BJ (cell line): ENCODE measurements at regions of chr11 and their contacts with region 1.

Region 1: GRCh38 chr11:101456812-101457211 is 127.0 kb downstream of the TRPC6 start:
- DNase-seq: no peak
- H3K4me3 ChIP-seq: no peak overlapping the region
- H3K27me3 ChIP-seq: no peaks in the 10 kb centered on the region
- CTCF ChIP-seq: peak; percentile 33; the same call in 1 of the 2 replicates

Region 2: DNA sequence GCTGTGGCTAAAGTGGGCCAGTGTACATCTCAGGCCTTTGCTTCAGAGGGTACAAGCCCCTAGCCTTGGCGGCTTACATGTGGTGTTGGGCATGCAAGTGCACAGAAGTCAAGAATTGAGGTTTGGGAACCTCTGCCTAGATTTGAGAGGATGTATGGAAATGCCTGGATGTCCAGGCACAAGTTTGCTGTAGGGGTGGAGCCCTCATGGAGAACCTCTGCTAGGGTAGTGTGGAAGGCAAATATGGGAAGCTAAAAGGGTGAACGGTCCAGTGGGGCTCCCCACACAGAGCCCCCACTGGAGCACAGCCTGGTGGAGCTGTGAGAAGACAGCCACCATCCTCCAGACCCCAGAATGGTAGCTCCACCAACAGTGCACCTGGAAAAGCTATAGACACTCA is 298.7 kb before region 1 on chr11:
- CTCF ChIA-PET with region 1: no interaction called
- POLR2A ChIA-PET with region 1: no interaction called
- DNase-seq: no peak
- H3K4me3 ChIP-seq: no peak overlapping the region
- H3K27me3 ChIP-seq: no peaks in the 10 kb centered on the region
- CTCF ChIP-seq: no peak

Region 3: GRCh38 chr11:101446238-101446637 is 10.6 kb before region 1 on chr11:
- CTCF ChIA-PET with region 1: interaction called, 13 read pairs
- POLR2A ChIA-PET with region 1: no interaction called
- DNase-seq: peak; percentile 81
- H3K4me3 ChIP-seq: no peak overlapping the region
- H3K27me3 ChIP-seq: no peaks in the 10 kb centered on the region
- CTCF ChIP-seq: no peak

Region 4: GRCh38 chr11:101848262-101848661 is 391.4 kb after region 1 on chr11:
- CTCF ChIA-PET with region 1: interaction called, 41 read pairs
- POLR2A ChIA-PET with region 1: no interaction called
- DNase-seq: no peak
- H3K4me3 ChIP-seq: no peak overlapping the region
- H3K27me3 ChIP-seq: no peaks in the 10 kb centered on the region
- CTCF ChIP-seq: peak; percentile 22; the same call in 1 of the 2 replicates